Activated B cell treated with CpG ODN at 0.5 μM for 24 hours (primary cell): ENCODE measurements at regions of chr4 and their contacts with region 1.

Region 1: GRCh38 chr4:39044364-39044955 is 12.3 kb upstream of the TMEM156 start:
- DNase-seq: peak; percentile 96
- ATAC-seq: peak; percentile 86
- H3K4me3 Mint-ChIP-seq: peak overlapping the region; percentile 86
- H3K27ac Mint-ChIP-seq: peak overlapping the region; percentile 88
- H3K4me1 Mint-ChIP-seq: peaks cover 62% of the 10 kb centered on the region
- H3K27me3 Mint-ChIP-seq: no peaks in the 10 kb centered on the region
- CTCF ChIP-seq: no peak

Region 2: DNA sequence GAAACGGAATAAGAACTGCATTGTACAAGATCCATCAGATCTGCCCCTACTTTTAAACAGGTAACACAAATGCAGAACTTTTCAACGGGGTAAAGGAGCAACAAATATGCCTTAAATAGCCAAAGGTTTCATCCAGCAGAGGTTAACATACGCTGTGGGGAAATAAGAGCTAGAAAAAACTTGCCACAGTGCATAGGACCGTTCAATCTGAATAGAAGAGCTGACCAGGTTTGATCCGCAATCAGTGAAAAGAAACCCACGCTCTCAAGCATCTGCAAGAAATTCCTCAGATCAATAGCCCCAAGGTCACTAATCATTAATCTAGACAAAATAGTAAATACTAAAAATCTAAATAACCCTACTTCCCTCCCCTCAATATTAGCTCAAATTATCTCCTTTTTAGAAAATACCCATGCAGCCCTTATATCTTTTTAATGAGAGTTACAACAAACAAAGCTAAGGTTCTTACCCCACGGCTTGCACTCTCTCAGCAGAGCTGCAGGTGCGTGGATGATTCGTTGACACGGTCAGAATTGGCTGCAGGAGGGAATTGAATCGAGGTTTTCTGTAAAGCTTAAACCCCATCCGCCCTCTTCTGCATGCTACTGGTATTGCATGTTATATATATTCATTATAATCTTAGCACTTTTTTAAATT is 261.9 kb before region 1 on chr4 and contains the start of gene TLR10:
- CTCF ChIA-PET with region 1: no interaction called
- POLR2A ChIA-PET with region 1: interaction called, 12 read pairs
- intact Hi-C with region 1: no loop called
- DNase-seq: no peak
- ATAC-seq: peak; percentile 80
- H3K4me3 Mint-ChIP-seq: peak within 1 kb of the TSS; percentile 100
- H3K27ac Mint-ChIP-seq: peak within 1 kb of the TSS; percentile 98
- H3K4me1 Mint-ChIP-seq: peaks cover 64% of the 10 kb centered on the region
- H3K27me3 Mint-ChIP-seq: no peaks in the 10 kb centered on the region
- CTCF ChIP-seq: no peak
- total RNA-seq, gene TLR10: 92.0 and 107 TPM in 2 replicates

Region 3: GRCh38 chr4:38902695-38903094 is 141.8 kb before region 1 on chr4:
- CTCF ChIA-PET with region 1: interaction called, 24 read pairs
- POLR2A ChIA-PET with region 1: interaction called, 5 read pairs
- intact Hi-C with region 1: loop called (anchors 1 kb)
- DNase-seq: no peak
- ATAC-seq: peak; percentile 71
- H3K4me3 Mint-ChIP-seq: no peak overlapping the region
- H3K27ac Mint-ChIP-seq: no peak overlapping the region
- H3K4me1 Mint-ChIP-seq: peaks cover 2% of the 10 kb centered on the region
- H3K27me3 Mint-ChIP-seq: no peaks in the 10 kb centered on the region
- CTCF ChIP-seq: peak; percentile 45

Region 4: DNA sequence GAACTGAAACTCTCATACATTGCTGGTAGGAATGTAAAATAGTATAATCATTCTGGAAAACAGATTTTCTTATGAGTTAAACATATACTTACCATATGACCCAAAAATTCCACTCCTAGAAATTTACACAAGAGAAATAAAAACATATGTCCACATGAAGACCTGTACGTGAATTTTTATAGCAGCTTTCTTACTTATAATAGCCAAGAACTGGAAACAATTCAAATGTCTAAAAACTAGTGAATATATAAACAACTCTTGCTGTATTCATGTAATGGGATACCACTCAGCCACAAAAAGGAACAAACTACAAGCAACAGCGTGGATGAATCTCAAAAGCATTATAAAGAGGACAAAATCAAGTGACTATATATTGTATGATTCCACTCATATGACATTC is 39.7 kb before region 1 on chr4:
- CTCF ChIA-PET with region 1: interaction called, 3 read pairs
- POLR2A ChIA-PET with region 1: interaction called, 5 read pairs
- intact Hi-C with region 1: loop called (anchors 2 kb)
- DNase-seq: no peak
- ATAC-seq: no peak
- H3K4me3 Mint-ChIP-seq: no peak overlapping the region
- H3K27ac Mint-ChIP-seq: peak overlapping the region; percentile 57
- H3K4me1 Mint-ChIP-seq: peaks cover 23% of the 10 kb centered on the region
- H3K27me3 Mint-ChIP-seq: no peaks in the 10 kb centered on the region
- CTCF ChIP-seq: no peak

Region 5: DNA sequence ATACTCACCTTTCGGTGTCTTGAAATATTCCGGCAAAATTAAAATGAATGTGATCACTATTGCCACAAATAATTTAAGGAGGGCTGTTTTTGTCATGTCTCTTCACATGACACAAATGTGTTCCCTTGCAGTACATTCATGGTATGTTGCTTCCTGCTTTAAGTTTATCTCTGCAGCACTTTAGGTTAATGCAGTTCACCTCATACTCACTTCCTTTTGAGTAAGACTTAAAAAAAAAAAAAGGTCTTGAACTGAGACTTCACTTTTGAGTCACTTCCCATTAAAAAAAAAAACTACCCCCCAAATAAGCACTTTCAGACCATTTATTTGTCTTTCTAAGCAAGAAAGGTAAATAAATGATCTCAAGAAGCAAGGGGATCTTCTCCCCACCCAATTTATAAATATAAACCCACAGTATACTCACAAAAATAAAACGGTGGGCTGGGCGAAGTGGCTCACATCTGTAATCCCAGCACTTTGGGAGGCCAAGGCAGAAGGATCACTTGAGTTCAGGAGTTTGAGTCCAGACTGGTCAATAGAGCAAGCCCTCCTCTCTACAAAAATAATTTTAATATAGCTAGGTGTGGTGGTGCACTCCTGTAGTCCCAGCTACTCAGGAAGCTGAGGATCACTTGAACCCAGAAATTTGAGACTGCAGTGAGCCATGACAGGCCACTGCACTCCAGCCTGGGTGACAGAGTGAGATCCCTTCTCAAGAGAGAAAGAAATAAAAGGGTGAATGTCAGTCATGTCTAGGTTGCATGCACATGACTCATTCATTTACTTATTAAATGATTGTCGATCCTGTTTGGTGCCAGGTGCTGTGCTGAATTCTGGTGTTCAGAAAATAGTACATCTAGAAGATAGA is 12.0 kb before region 1 on chr4 and contains the start of gene TMEM156:
- CTCF ChIA-PET with region 1: interaction called, 14 read pairs
- POLR2A ChIA-PET with region 1: interaction called, 215 read pairs
- intact Hi-C with region 1: loop called (anchors 1 kb)
- DNase-seq: no peak
- ATAC-seq: peak; percentile 69
- H3K4me3 Mint-ChIP-seq: peak within 1 kb of the TSS; percentile 83
- H3K27ac Mint-ChIP-seq: peak within 1 kb of the TSS; percentile 93
- H3K4me1 Mint-ChIP-seq: peaks cover 64% of the 10 kb centered on the region
- H3K27me3 Mint-ChIP-seq: no peaks in the 10 kb centered on the region
- CTCF ChIP-seq: no peak
- total RNA-seq, gene TMEM156: 26.0 and 29.5 TPM in 2 replicates

Region 6: DNA sequence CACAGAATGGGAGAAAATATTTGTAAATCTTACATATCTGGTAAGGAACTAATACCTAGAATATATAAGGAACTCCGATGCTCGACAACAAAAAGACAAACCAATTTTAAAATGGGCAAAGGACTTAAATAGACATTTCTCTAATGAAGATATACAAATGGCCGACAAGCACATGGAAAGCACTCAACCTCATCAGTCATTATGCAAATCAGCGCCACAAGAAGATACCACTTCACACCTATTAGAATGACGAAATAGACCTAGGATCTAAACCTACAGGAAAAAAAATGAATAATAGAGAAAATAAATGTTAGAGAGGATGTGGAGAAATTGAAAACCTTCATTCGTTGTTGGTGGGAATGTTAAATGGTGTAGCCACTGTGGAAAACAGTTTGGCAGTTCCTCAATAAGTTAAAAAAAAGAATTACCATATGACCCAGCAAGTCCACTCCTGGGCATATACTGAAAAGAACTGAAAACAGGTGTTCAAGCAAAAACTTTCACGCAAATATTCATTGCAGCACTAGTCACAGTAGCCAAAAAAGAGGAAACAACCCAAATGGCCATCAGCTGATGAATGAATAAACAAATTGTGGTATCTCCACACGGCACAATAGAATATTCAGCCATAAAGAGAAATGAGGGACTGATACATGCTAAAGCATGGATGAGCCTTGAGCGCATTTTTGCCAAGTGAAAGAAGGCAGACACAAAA is 80.6 kb after region 1 on chr4:
- CTCF ChIA-PET with region 1: no interaction called
- POLR2A ChIA-PET with region 1: interaction called, 4 read pairs
- intact Hi-C with region 1: loop called (anchors 1 kb)
- DNase-seq: no peak
- ATAC-seq: peak; percentile 90
- H3K4me3 Mint-ChIP-seq: peak overlapping the region; percentile 2
- H3K27ac Mint-ChIP-seq: peak overlapping the region; percentile 78
- H3K4me1 Mint-ChIP-seq: peaks cover 27% of the 10 kb centered on the region
- H3K27me3 Mint-ChIP-seq: no peaks in the 10 kb centered on the region
- CTCF ChIP-seq: no peak

Region 7: DNA sequence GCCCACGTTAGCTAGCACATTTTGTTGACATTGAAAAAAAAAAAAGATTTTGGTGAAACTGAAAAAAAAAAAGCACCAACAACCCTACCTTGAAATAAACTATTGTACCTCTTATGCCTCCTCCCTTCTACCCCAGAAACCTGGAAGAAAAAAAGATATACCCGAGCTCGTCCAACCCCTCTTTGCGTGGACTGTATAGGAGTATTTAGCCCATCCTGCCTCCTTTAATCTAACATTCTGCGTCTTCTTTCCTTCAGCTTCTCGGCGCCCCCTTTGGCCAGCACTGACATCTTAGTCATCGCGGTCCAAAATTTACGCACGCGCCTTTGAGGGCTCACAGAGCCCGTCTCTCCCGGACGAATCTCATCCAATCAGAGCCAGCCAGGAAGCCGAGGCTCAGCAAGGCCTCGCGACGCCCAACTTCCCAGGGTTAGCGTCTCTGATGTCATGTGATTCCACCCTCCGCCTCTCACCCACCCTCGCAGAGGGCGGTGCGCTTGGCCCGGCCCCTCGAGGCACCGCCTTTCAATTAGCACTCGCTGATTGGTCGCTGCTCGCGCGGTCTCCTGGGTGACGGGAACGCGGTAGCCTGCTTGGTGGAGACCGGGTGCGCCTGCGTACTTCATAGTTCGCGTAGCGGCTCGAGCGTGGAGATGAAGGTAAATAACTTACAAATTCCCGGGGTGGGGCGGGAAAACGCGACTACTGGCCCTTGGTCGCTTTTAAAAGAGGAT is 137.6 kb after region 1 on chr4 and contains the start of gene WDR19:
- CTCF ChIA-PET with region 1: no interaction called
- POLR2A ChIA-PET with region 1: interaction called, 6 read pairs
- intact Hi-C with region 1: loop called (anchors 1 kb)
- DNase-seq: peak; percentile 93
- ATAC-seq: peak; percentile 97
- H3K4me3 Mint-ChIP-seq: no peak within 1 kb of the TSS
- H3K27ac Mint-ChIP-seq: peak within 1 kb of the TSS; percentile 46
- H3K4me1 Mint-ChIP-seq: peaks cover 7% of the 10 kb centered on the region
- H3K27me3 Mint-ChIP-seq: no peaks in the 10 kb centered on the region
- CTCF ChIP-seq: no peak
- total RNA-seq, gene WDR19: 23.8 and 28.4 TPM in 2 replicates